A673 (cell line): ENCODE measurements at regions of chr1 and their contacts with region 1.

Region 1: GRCh38 chr1:220776720-220777326 is 9.9 kb upstream of the MTARC1 start:
- DNase-seq: peak; percentile 78
- H3K4me3 ChIP-seq: no peak overlapping the region
- H3K27ac ChIP-seq: no peak overlapping the region
- H3K4me1 ChIP-seq: no peaks in the 10 kb centered on the region
- H3K27me3 ChIP-seq: no peaks in the 10 kb centered on the region
- CTCF ChIP-seq: peak; percentile 97

Region 2: DNA sequence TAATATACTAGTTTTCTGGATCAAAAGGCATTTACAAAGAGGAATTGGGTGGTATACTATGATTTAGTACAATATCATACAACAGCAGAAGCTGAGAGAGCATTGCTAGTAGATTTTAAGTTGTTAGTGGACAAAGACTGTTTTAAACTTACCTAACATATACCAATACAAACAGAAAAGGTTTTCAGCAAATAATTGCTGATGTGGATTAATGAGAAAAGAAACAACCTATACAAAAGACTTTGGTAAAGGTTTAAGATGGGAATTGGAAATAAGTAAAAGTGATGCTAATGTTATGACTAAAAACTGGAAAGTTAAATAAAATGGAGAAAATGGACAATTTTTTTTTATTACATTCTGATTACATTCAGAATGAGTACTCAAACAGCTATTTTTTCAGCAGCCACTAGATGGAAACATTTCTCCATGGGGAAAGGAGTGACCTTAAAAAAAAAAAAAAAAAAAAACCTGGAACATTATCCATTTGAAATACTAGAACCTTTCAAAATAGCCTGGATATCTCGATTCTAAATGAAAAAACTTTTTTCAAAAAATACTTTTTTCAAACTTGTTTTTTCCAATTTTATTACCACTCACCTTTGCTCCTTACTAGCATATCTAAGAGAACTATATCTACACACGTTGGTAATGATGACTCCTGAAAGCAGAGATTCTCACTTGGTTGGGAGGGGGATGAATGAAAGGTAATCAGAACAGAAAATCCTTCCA is 785.9 kb before region 1 on chr1:
- CTCF ChIA-PET with region 1: no interaction called
- POLR2A ChIA-PET with region 1: no interaction called
- intact Hi-C with region 1: loop called (anchors 5 kb)
- DNase-seq: peak; percentile 56
- H3K4me3 ChIP-seq: no peak overlapping the region
- H3K27ac ChIP-seq: no peak overlapping the region
- H3K4me1 ChIP-seq: no peaks in the 10 kb centered on the region
- H3K27me3 ChIP-seq: no peaks in the 10 kb centered on the region
- CTCF ChIP-seq: peak; percentile 72

Region 3: DNA sequence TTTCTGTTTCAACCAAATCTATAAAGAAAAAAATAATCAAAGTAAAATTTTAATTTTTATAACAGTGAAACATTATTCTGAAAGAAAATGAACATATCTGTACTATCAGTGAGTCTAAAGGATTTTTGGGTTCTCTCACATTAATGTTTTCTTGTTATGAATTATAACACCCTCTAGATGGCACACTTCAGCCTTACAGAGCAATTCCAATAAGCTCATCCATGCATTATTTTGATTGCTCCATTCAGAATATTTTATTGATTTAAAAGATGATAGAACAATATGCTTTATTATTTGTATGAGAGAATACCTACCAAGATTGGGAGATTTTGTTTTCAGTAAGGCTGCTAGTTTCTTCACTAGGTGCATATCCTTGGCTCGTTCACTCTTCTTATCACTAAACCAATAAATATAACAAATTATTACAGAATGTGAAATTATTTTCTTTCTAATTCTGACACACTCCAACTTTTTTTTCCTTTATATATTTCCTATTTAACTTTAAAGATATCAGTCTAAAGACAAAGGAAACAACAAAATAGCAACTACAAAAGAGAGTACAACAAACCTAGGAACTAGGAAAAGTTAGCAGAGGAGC is 587.0 kb before region 1 on chr1:
- CTCF ChIA-PET with region 1: interaction called, 5 read pairs
- POLR2A ChIA-PET with region 1: no interaction called
- intact Hi-C with region 1: loop called (anchors 5 kb)
- DNase-seq: peak; percentile 53
- H3K4me3 ChIP-seq: no peak overlapping the region
- H3K27ac ChIP-seq: no peak overlapping the region
- H3K4me1 ChIP-seq: no peaks in the 10 kb centered on the region
- H3K27me3 ChIP-seq: no peaks in the 10 kb centered on the region
- CTCF ChIP-seq: peak; percentile 64

Region 4: DNA sequence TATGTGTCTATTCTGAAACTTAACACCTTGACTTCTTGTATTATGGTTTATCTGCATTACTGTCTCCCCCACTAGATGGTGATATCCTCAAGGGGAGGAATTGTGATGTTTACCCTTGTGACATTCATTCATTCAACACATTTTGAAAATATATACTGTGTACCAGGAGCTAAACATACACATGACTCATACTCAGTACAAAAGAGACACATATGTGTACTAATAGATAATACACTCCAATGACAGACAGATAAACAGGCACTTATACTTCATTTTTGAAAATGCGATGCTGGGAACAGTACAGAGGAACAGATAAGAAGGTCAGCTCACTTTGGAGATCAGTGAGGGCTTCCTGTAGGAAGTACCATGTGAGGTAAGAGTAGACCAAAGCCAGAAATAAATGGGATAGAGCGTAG is 495.7 kb before region 1 on chr1:
- CTCF ChIA-PET with region 1: interaction called, 4 read pairs
- POLR2A ChIA-PET with region 1: no interaction called
- intact Hi-C with region 1: loop called (anchors 1 kb)
- DNase-seq: peak; percentile 47
- H3K4me3 ChIP-seq: no peak overlapping the region
- H3K27ac ChIP-seq: no peak overlapping the region
- H3K4me1 ChIP-seq: no peaks in the 10 kb centered on the region
- H3K27me3 ChIP-seq: peaks cover 4% of the 10 kb centered on the region
- CTCF ChIP-seq: peak; percentile 62

Region 5: GRCh38 chr1:220669005-220669404 is 107.8 kb before region 1 on chr1:
- CTCF ChIA-PET with region 1: no interaction called
- POLR2A ChIA-PET with region 1: no interaction called
- intact Hi-C with region 1: no loop called
- DNase-seq: no peak
- H3K4me3 ChIP-seq: no peak overlapping the region
- H3K27ac ChIP-seq: no peak overlapping the region
- H3K4me1 ChIP-seq: no peaks in the 10 kb centered on the region
- H3K27me3 ChIP-seq: peaks cover 8% of the 10 kb centered on the region
- CTCF ChIP-seq: no peak